Heart right ventricle (tissue), 16 donors: ENCODE measurements at regions of chr3 and their contacts with region 1.

Region 1: DNA sequence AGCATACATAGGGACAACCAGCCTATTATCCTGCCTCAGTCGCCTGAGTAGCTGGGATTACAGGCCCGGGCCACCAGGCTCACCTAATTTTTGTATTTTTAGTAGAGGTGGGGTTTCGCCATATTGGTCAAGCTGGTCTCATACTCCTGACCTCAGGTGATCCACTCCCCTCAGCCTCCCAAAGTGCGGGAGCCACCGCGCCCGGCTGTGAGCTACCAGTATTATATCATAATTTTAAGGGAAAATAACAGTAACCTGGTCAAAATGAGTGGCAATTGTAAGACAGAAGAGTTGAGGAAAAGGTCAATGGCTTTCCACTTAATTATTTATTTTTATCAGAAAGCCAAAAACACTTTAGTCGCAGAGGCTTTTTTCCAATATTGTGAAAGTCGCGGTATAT is 652.6 kb upstream of the BCHE start:
- DNase-seq: no peak
- ATAC-seq: no peak
- H3K4me3 ChIP-seq: no peak overlapping the region
- H3K27ac ChIP-seq: no peak overlapping the region
- H3K4me1 ChIP-seq: no peaks in the 10 kb centered on the region
- H3K27me3 ChIP-seq: no peaks in the 10 kb centered on the region
- CTCF ChIP-seq: no peak

Region 2: GRCh38 chr3:166362698-166363097 is 127.1 kb before region 1 on chr3:
- intact Hi-C with region 1: no loop called
- DNase-seq: no peak
- ATAC-seq: no peak
- H3K4me3 ChIP-seq: no peak overlapping the region
- H3K27ac ChIP-seq: no peak overlapping the region
- H3K4me1 ChIP-seq: no peaks in the 10 kb centered on the region
- H3K27me3 ChIP-seq: no peaks in the 10 kb centered on the region
- CTCF ChIP-seq: no peak

Region 3: DNA sequence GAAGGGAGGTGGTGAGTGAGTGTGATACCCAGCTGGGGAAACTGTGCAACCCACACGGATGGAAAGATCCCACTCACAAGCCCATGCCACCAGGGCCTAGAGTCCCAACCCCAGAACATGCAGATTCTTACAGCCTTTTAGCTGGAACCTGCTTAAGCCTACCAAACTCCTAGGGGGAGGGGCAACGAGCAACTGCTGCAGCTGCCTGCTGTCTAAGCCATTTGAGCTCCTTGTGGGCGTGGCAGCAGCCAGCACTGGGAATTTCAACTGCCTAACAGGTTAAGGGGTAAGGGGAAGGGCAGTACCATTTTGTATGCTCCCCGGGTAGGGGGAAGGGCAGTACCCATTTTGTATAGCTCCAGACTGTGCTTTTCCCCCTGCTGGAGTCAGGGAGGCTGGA is 20.6 kb after region 1 on chr3:
- intact Hi-C with region 1: loop called in 1 of 10 experiments (anchors 2 kb)
- DNase-seq: no peak
- ATAC-seq: no peak
- H3K4me3 ChIP-seq: no peak overlapping the region
- H3K27ac ChIP-seq: no peak overlapping the region
- H3K4me1 ChIP-seq: no peaks in the 10 kb centered on the region
- H3K27me3 ChIP-seq: no peaks in the 10 kb centered on the region
- CTCF ChIP-seq: no peak